Panc1 (cell line): ENCODE measurements at regions of chr16 and their contacts with region 1.

Region 1: DNA sequence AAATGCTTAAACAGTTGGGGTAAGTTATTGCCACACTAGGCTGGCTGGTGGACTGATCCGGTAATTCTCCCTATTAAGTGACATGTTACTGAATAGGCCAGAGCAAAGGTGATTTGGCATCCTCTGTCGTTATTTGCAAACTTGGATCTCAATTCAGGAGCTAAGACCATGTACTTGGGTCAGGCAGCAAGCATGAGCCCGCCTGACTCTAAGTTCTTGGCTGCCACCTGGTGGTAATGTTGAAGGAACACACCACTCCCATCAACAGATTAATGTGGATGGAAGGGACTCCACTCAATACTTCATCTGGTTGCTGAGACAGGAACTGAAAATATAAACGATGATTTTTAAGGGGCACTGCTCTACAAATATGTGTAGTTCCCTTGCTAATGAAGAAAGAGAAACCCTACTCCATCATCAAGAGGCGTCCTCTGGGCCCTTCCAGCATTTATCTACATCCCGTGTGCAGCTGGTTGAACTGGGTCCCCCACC is 70.8 kb downstream of the EMP2 start:
- DNase-seq: peak; percentile 62
- ATAC-seq: peak; percentile 99
- H3K4me3 ChIP-seq: no peak overlapping the region
- H3K27ac ChIP-seq: no peak overlapping the region
- H3K4me1 ChIP-seq: no peaks in the 10 kb centered on the region
- H3K27me3 ChIP-seq: no peaks in the 10 kb centered on the region
- CTCF ChIP-seq: peak; percentile 85

Region 2: GRCh38 chr16:10256784-10257641 is 252.6 kb before region 1 on chr16:
- CTCF ChIA-PET with region 1: interaction called, 3 read pairs
- POLR2A ChIA-PET with region 1: no interaction called
- in situ Hi-C with region 1: no loop called
- intact Hi-C with region 1: loop called (anchors 2 kb)
- DNase-seq: no peak
- ATAC-seq: peak; percentile 83
- H3K4me3 ChIP-seq: no peak overlapping the region
- H3K27ac ChIP-seq: no peak overlapping the region; the same call in 1 of the 2 replicates
- H3K4me1 ChIP-seq: no peaks in the 10 kb centered on the region; the same call in 1 of the 2 replicates
- H3K27me3 ChIP-seq: no peaks in the 10 kb centered on the region
- CTCF ChIP-seq: peak; percentile 97

Region 3: DNA sequence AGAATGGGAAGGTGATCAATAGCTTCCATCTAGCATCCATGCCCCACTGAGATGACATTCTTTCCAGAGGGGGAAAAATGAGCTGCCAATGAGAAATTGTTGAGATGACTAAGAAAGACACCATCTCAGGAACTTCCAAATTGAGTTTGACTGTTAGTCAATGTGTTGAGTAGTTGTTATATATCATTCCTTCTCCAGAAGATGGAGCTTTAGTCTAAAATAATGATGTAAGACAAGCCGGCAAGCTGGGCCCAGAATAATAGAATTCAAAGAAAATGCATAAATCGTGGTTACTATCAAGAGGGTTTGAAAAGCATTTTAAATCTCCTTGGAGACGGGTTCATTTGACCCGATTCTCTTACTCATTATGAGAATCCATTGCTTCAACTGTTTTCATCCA is 194.8 kb before region 1 on chr16:
- CTCF ChIA-PET with region 1: interaction called, 11 read pairs
- POLR2A ChIA-PET with region 1: no interaction called
- in situ Hi-C with region 1: no loop called
- intact Hi-C with region 1: loop called (anchors 5 kb)
- DNase-seq: no peak
- ATAC-seq: no peak; the same call in 1 of the 2 replicates
- H3K4me3 ChIP-seq: no peak overlapping the region
- H3K27ac ChIP-seq: no peak overlapping the region
- H3K4me1 ChIP-seq: no peaks in the 10 kb centered on the region
- H3K27me3 ChIP-seq: no peaks in the 10 kb centered on the region
- CTCF ChIP-seq: no peak; the same call in 1 of the 2 replicates

Region 4: DNA sequence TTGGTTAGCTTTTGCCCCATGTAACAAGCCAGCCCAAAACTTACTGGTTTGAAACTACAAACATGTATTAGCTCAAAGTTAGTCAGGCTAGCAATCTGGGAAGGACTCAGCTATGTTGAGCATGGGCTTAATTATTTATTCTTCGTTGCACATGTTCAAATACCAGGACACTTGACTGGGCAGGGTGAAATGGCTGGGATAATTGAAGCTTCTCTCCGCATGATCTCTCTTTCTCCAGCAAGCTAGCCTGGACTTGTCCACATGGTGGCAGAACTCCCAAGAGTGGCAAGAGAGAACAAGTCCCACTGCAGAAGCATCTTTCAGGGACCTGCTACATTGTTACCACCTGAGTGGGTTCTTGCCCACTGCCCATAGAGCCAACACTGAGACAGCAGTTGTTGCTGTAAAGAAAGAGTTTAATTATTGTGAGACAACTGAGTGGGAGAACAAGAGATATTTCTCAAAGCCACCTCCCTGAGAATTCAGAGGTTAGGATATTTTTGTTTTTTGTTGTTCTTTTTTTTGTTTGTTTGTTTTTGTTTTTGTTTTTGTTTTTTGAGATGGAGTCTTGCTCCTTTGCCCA is 140.5 kb before region 1 on chr16:
- CTCF ChIA-PET with region 1: no interaction called
- POLR2A ChIA-PET with region 1: interaction called, 13 read pairs
- in situ Hi-C with region 1: no loop called
- intact Hi-C with region 1: no loop called
- DNase-seq: no peak
- ATAC-seq: no peak
- H3K4me3 ChIP-seq: no peak overlapping the region
- H3K27ac ChIP-seq: no peak overlapping the region; the same call in 1 of the 2 replicates
- H3K4me1 ChIP-seq: no peaks in the 10 kb centered on the region
- H3K27me3 ChIP-seq: no peaks in the 10 kb centered on the region
- CTCF ChIP-seq: peak; percentile 46